Ascending aorta (tissue), 2 donors: ENCODE measurements at regions of chr20 and their contacts with region 1.

Region 1: DNA sequence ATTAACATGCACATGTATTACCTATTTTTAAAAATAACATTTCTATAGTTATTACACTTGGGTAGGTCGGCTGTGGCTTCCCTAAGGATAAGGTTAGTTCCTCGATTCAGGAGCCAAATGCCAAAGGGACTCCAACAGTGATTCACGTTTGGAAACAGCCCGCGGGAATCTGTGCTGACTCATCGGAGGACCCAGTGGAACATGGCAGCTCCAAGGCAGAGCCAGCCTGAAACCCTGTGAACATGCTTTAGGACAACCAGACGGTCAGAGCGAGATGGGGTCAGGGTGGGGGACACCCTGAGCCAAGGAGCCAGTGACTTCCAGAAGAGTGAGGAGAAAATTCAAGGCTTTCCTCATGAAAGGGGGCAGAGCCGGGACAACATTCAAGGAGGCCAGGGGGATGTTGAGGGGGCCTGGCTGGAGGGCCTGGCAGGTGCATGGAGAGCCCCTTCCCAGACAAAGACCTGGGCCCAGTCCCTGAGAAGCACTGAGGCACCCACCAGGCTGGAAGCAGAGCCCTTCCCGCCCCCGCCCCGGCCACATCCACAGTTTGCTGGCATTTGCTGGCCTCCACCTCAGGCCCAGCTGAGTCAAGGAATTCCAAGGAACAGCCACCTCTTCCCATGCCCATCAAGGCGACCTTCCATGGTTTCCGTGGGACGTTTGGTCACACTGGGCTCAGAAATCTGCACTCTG is 133.2 kb downstream of the SNX5 start:
- DNase-seq: peak in 1 of 2 donors; percentile 92
- H3K4me3 ChIP-seq: no peak overlapping the region
- H3K27ac ChIP-seq: peak overlapping the region; percentile 88 to 90
- H3K4me1 ChIP-seq: peaks cover 15 to 25% of the 10 kb centered on the region in 2 donors
- H3K27me3 ChIP-seq: no peaks in the 10 kb centered on the region
- CTCF ChIP-seq: no peak

Region 2: DNA sequence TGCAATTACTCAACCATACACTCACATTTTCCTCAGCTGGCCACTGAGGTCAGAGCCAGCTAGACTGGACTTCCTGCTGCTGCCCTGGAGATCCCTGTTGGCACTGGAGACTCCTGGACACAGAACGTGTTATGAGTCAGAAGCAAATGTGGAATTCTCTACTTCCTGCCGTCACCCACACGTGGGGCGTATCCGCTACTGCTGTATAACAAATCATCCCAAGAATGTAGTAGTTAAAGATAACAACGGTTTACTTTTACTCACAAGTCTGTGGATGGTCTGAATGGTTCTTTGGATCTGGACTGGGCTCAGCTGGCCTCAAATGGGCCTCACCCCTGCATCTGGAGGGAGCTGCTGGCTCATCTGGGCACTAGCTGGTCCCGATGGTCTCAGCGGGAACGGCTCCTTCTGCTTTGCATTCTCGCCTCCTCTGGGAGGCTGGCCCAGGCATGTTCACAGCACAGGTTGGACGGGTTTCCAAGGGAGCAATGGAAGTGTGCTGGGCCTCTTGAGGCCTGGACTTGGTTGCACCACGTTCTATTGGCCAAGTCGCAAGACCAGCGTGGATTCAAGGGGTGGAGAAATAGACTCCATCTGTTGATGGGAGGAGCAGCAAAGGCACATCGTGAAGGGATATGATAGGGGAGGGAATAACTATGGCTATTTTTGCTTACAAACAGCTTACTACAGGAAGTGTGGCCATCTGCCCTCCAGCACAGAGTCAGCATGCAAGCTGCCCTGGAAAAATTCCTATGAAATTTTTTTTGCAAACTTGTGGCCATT is 14.7 kb after region 1 on chr20:
- intact Hi-C with region 1: loop called (anchors 1 kb)
- DNase-seq: peak; percentile 78 to 97
- H3K4me3 ChIP-seq: peak overlapping the region in 1 of 2 donors; percentile 8
- H3K27ac ChIP-seq: peak overlapping the region; percentile 90 to 93
- H3K4me1 ChIP-seq: peaks cover 7 to 14% of the 10 kb centered on the region in 2 donors
- H3K27me3 ChIP-seq: no peaks in the 10 kb centered on the region
- CTCF ChIP-seq: no peak

Region 3: DNA sequence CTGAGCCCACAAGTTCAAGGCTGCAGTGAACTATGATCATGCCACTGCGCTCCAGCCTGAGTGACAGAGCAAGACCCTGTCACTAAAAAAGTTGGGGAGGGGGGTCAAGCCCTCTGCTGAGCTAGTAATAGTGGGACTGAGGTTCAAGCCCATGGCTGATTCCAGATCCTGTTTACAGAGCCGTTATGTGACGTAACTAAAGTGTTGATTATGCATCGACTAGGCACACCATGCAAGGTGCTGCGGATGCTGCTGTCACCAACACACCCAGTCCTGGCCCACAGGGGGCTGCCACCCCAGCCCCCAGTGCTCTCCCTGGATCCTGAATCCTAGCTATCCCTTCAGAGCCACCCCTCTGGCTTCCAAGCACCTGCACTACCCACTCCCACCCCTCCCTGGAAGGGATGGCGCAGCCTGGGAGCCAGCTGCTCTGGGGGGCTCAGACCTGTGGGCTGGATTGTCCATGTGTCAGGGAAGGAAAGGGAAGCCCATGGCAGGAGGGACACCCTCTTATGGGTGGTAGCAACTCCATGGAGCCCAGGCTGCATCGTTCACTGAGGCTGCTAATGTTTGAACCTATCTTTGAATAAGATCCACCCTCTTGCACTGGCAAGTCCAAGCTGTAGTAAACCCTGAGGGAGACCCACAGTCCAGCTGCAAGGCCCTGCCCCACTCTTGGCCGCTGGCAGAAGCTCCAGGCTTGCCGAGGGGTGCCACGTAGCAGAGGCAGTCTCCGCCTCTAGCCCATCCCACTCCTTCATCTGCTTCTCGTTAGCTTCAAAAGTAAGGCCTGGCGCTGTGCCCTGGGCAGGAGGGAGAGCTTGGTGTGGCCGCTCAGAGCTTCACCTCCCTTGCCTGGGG is 38.3 kb after region 1 on chr20:
- intact Hi-C with region 1: loop called (anchors 5 kb)
- DNase-seq: peak; percentile 55 to 92
- H3K4me3 ChIP-seq: peak overlapping the region in 1 of 2 donors; percentile 29
- H3K27ac ChIP-seq: peak overlapping the region; percentile 45 to 59
- H3K4me1 ChIP-seq: peaks cover 12 to 26% of the 10 kb centered on the region in 2 donors
- H3K27me3 ChIP-seq: no peaks in the 10 kb centered on the region
- CTCF ChIP-seq: no peak

Region 4: DNA sequence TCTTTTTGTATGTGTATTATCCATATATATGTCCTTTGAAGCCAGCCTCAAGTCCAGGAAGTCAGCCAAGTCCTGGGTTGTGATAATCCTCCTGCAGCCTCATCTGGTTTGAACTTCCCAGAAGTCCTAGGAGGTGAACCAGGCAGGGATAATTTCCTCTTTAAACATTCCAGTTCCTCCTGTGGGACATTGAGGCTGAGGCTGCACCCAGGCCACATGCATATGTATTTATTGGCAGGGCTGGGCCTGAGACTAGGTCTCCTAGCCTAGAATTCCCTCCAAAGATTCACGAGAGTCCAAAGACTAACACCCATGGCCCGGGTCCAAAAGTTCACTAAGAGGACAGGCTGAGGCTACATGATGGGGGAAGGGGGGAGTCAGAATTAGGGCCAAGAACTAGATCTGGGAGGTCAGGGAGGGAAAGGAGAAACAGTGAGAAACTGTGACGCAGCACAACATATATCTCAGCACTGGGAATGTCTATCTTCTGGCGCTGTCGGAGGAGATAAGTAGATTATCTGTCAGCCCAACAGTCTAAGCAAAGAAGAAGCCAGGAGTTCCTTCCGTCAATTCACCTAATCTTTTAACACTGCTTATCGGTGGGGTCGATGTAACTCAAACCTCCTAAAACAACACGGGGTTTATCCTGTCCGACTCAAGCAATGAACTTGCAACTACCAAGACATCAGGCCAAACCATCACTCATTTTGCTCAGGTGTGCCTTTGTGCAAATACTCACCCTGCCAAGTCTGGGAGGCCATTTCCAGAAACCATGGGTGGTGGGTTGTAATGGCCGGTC is 90.0 kb after region 1 on chr20:
- intact Hi-C with region 1: no loop called
- DNase-seq: no peak
- H3K4me3 ChIP-seq: no peak overlapping the region
- H3K27ac ChIP-seq: no peak overlapping the region
- H3K4me1 ChIP-seq: peaks cover 0 to 7% of the 10 kb centered on the region in 2 donors
- H3K27me3 ChIP-seq: no peaks in the 10 kb centered on the region
- CTCF ChIP-seq: no peak